ENCODE measurements at regions of chr10 and their contacts with region 1.

Region 1: GRCh38 chr10:127354992-127355391 is 158.6 kb upstream of the INSYN2A start:
- DNase-seq: no peak
- ATAC-seq: no peak
- H3K4me3 Mint-ChIP-seq: no peak overlapping the region
- H3K27ac Mint-ChIP-seq: no peak overlapping the region
- H3K4me1 Mint-ChIP-seq: no peaks in the 10 kb centered on the region
- H3K27me3 Mint-ChIP-seq: peaks cover 5% of the 10 kb centered on the region

Region 2: DNA sequence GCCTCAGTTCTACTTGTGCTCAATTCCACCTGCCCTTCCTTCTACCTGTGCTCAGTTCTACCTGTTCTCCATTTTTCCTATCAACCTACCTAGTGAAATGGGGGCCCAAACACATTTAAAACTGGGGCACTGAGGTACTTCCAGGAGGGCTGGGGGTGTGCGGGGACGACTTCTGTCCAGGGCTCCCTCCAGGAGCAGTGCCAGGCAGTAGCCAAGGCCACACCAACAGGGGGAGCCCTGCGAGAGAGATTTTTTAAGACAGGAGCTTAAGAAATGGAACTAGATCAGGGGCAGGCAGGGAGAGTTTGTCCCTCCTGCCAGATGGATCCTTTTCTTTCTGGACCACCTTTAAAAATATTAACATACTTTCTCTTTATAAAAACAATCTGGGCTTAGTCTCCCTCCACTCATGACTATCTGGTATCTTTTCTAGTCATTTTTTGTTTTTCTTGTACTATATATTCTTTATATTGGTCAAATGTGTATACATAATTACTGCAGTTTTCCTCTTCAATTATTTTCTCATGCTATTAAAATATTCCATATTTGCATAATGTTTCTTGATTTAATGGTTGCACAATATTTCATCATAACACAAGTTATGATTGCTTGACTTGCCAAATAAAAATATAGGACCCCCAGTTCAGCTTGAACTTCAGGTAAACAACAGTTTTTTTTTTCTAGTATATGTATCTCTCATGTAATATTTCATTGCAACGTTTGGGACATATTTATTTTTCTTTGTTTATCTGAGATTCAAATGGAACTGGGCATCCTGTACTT is 111.3 kb before region 1 on chr10:
- CTCF ChIA-PET with region 1: interaction called, 3 read pairs
- POLR2A ChIA-PET with region 1: no interaction called
- intact Hi-C with region 1: loop called in 1 of 2 experiments (anchors 2 kb)
- DNase-seq: peak; percentile 70
- ATAC-seq: peak; percentile 60
- H3K4me3 Mint-ChIP-seq: no peak overlapping the region
- H3K27ac Mint-ChIP-seq: no peak overlapping the region
- H3K4me1 Mint-ChIP-seq: no peaks in the 10 kb centered on the region
- H3K27me3 Mint-ChIP-seq: peaks cover 9% of the 10 kb centered on the region

Region 3: GRCh38 chr10:127320176-127320575 is 34.8 kb before region 1 on chr10:
- CTCF ChIA-PET with region 1: no interaction called
- POLR2A ChIA-PET with region 1: no interaction called
- intact Hi-C with region 1: no loop called
- DNase-seq: no peak
- ATAC-seq: no peak
- H3K4me3 Mint-ChIP-seq: no peak overlapping the region
- H3K27ac Mint-ChIP-seq: no peak overlapping the region
- H3K4me1 Mint-ChIP-seq: no peaks in the 10 kb centered on the region
- H3K27me3 Mint-ChIP-seq: peaks cover 10% of the 10 kb centered on the region

Measured in activated CD4-positive, alpha-beta T cell treated with anti-CD3 and anti-CD28 coated beads for 36 hours (primary cell).